ENCODE measurements at regions of chr19 and their contacts with region 1.

Region 1: GRCh38 chr19:10769533-10770491 is 51.9 kb downstream of the DNM2 start:
- DNase-seq: peak in 4 of 5 donors; percentile 49 to 73 (median 64)
- H3K4me3 ChIP-seq: peak overlapping the region in 1 of 3 donors; percentile 41
- H3K27ac ChIP-seq: peak overlapping the region; percentile 82 to 86
- H3K4me1 ChIP-seq: peaks cover 0 to 56% (median 49%) of the 10 kb centered on the region in 3 donors
- H3K27me3 ChIP-seq: no peaks in the 10 kb centered on the region
- CTCF ChIP-seq: peak; percentile 59

Region 2: GRCh38 chr19:10677751-10678150 is 92.1 kb before region 1 on chr19:
- intact Hi-C with region 1: no loop called
- DNase-seq: no peak
- H3K4me3 ChIP-seq: no peak overlapping the region
- H3K27ac ChIP-seq: no peak overlapping the region
- H3K4me1 ChIP-seq: no peaks in the 10 kb centered on the region
- H3K27me3 ChIP-seq: no peaks in the 10 kb centered on the region
- CTCF ChIP-seq: no peak

Region 3: DNA sequence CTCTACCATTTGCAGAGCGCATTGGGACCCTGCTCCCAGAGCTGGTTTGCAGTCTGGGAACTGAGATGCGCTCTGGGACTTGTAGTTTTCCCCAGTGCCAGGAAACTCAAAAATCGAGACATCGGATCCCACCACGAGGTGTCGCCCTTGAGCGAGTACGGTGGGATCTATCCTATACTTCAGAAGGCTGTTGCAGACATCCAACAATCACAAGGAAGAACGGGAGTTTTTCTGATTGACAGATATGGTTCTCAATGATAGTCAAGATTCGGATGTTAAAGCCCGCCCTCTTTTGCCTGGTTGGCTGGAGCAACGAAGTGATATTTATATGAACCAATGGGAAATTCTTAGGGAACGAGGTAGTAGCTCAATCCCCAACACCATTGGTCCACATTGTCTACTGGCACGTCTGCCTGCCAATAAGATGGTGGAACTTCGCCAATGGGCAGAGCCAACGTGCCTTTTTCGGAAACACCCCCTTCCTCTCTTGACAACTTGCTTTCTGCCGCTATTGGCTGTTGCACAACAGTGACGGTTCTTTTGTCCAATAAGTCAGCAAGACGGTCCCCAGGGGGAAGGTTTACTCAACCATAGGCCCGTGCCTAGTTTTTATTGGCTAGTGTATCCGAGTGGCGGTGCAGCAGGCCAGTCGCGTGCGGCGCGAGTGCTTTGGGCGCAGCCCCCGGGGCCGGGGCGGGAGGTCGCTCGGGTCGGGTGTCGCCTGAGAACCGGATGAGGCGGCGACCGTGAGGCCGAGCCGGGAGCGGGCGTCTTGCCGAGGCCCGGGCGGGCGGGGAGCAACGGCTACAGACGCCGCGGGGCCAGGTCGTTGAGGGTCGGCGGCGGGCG is 52.2 kb before region 1 on chr19 and contains the start of gene DNM2:
- intact Hi-C with region 1: loop called (anchors 10 kb)
- DNase-seq: peak; percentile 99 to 100 (median 100)
- H3K4me3 ChIP-seq: peak within 1 kb of the TSS; percentile 78 to 94 (median 92)
- H3K27ac ChIP-seq: peak within 1 kb of the TSS; percentile 90 to 95
- H3K4me1 ChIP-seq: peaks cover 0 to 23% (median 9%) of the 10 kb centered on the region in 3 donors
- H3K27me3 ChIP-seq: no peaks in the 10 kb centered on the region
- CTCF ChIP-seq: peak; percentile 89
- total RNA-seq, gene DNM2: 226 TPM

Region 4: GRCh38 chr19:10899151-10899653 is 129.4 kb after region 1 on chr19:
- intact Hi-C with region 1: no loop called
- DNase-seq: peak in 1 of 5 donors; percentile 90
- H3K4me3 ChIP-seq: no peak overlapping the region
- H3K27ac ChIP-seq: no peak overlapping the region
- H3K4me1 ChIP-seq: peaks cover 0 to 21% (median 0%) of the 10 kb centered on the region in 3 donors
- H3K27me3 ChIP-seq: no peaks in the 10 kb centered on the region
- CTCF ChIP-seq: no peak

Region 5: GRCh38 chr19:11125994-11126685 is 356.3 kb after region 1 on chr19:
- intact Hi-C with region 1: no loop called
- DNase-seq: peak; percentile 79 to 92 (median 85)
- H3K4me3 ChIP-seq: no peak overlapping the region
- H3K27ac ChIP-seq: no peak overlapping the region
- H3K4me1 ChIP-seq: peaks cover 0 to 6% (median 0%) of the 10 kb centered on the region in 3 donors
- H3K27me3 ChIP-seq: no peaks in the 10 kb centered on the region
- CTCF ChIP-seq: peak; percentile 85